ENCODE measurements at regions of chr4 and their contacts with region 1.

Region 1: GRCh38 chr4:185395956-185396723 is 416 bp upstream of the LRP2BP start:
- DNase-seq: peak; percentile 91 to 98 (median 95)
- ATAC-seq: peak; percentile 92
- H3K4me3 ChIP-seq: peak overlapping the region; percentile 73 to 95
- H3K4me3 Mint-ChIP-seq: peak overlapping the region; percentile 95
- H3K27ac ChIP-seq: peak overlapping the region; percentile 98 to 99
- H3K27ac Mint-ChIP-seq: peak overlapping the region; percentile 99
- H3K4me1 ChIP-seq: peaks cover 16% of the 10 kb centered on the region
- H3K4me1 Mint-ChIP-seq: peaks cover 20% of the 10 kb centered on the region
- H3K27me3 ChIP-seq: no peaks in the 10 kb centered on the region
- H3K27me3 Mint-ChIP-seq: no peaks in the 10 kb centered on the region
- CTCF ChIP-seq: no peak

Region 2: DNA sequence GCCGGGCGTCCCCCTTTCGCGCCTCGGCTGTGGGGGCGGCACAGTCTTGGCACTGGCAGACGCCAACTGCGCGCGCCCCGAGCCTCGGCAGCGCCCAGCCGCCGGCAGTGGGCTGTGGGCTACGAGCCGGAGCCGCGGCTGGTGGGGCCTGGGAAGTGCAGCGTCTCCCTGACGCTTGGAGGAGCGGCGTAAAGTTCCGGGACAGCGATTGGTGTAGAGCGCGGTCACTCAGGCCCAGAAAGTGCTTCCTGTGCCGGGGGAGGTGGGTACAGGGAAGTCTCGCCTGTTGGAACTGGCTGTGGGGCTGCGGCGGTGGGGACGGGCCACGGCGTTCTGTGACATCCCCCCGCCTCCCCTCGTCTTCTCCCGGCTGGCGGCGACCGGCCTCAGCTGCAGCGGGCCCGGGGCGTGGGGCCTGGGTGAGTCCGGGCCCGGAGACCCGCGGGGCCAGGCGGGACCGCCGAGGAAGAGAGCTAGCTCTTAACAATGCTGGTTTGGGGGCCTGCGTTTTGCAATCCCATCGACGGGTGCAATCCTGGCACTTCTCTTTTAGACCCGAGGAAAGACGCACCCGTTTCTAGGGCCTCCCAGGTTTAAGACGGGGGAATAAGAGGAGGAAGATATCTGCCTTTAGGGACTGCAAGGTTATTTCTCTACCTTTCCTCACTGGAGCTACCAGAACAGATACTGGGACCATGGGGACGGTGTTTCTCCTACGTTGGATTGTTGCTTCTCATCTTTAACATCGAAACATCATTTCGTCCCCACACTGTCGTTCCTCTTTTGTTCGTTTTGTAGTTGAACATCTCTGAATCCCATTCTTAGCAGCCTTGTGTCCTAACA is 1736.9 kb before region 1 on chr4 and contains the starts of genes RWDD4 and TRAPPC11:
- CTCF ChIA-PET with region 1: no interaction called
- POLR2A ChIA-PET with region 1: no interaction called
- intact Hi-C with region 1: loop called in 1 of 2 experiments (anchors 10 kb)
- DNase-seq: peak; percentile 90 to 99 (median 95)
- ATAC-seq: peak; percentile 96
- H3K4me3 ChIP-seq: peak within 1 kb of the TSS; percentile 72 to 83
- H3K4me3 Mint-ChIP-seq: peak within 1 kb of the TSS; percentile 92
- H3K27ac ChIP-seq: peak within 1 kb of the TSS; percentile 83 to 89
- H3K27ac Mint-ChIP-seq: peak within 1 kb of the TSS; percentile 91
- H3K4me1 ChIP-seq: peaks cover 25% of the 10 kb centered on the region
- H3K4me1 Mint-ChIP-seq: peaks cover 42% of the 10 kb centered on the region
- H3K27me3 ChIP-seq: no peaks in the 10 kb centered on the region
- H3K27me3 Mint-ChIP-seq: no peaks in the 10 kb centered on the region
- CTCF ChIP-seq: no peak
- total RNA-seq, gene RWDD4: 9.0 to 12.1 TPM
- total RNA-seq, gene TRAPPC11: 14.7 to 22.1 TPM

Region 3: DNA sequence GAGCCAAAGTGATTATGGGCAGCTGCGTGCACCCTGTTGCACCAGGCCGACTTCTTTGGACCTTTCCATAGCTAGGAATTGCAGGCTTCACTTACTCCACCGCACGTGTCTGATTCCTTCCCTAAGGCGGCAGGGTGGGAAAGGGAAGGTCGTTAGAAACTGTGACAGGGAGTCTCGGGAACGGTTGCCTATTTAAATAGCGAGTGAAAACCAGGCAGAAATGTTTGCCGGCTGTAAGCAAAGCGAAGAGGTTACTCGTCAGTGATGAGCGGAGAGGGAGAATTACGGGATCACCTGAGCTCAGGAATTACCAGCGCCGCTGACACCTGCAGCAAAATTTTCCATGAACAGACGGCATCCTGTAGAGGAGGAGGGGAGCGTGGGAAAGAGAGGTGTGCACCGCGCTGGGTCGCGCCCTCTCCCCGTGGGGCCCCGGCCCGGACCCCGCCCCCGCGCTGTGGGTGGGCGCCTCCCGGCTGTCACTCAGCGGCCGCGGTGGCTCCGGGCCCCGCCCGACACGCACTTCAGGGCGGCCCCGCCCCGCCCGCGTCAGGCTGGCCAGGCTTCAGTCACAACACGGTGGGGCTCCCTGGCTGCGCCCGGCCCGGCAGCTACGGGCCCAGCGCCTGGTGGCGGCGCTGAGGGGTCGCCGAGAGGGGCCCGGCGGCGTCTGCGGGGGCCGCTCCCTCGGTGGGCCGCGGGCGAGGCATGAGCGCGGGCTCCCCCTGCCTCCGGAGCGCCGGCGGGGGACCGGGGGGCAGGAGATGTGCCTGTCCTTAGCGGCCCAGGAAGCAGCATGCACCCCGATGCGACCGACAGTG is 186.9 kb before region 1 on chr4 and contains the start of gene SNX25:
- CTCF ChIA-PET with region 1: no interaction called
- POLR2A ChIA-PET with region 1: interaction called, 6 read pairs
- intact Hi-C with region 1: loop called in 1 of 2 experiments (anchors 1 kb)
- DNase-seq: peak; percentile 68 to 92 (median 89)
- ATAC-seq: peak; percentile 92
- H3K4me3 ChIP-seq: peak within 1 kb of the TSS; percentile 60 to 71
- H3K4me3 Mint-ChIP-seq: peak within 1 kb of the TSS; percentile 92
- H3K27ac ChIP-seq: peak within 1 kb of the TSS; percentile 34 to 48
- H3K27ac Mint-ChIP-seq: peak within 1 kb of the TSS; percentile 84
- H3K4me1 ChIP-seq: peaks cover 33% of the 10 kb centered on the region
- H3K4me1 Mint-ChIP-seq: peaks cover 50% of the 10 kb centered on the region
- H3K27me3 ChIP-seq: no peaks in the 10 kb centered on the region
- H3K27me3 Mint-ChIP-seq: no peaks in the 10 kb centered on the region
- CTCF ChIP-seq: no peak
- total RNA-seq, gene SNX25: 18.0 to 18.2 TPM

Region 4: DNA sequence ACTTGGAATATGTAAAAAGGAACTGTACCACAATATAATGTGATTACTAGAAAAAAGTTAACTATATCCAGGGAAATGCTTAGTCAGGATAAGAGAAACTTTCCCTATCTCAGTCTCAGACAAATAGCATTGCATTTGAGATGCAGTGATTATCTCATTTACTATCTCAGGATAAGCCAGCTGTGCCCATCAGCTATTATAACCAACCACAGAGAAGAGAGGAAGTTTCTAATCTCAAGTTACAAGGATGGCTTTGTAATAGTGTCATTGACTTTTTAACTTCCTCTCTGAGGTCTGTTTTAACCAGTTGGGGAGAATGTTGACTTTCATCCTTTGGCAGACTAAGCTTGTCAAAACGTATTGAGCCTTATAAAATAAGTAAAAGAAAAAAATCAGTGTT is 130.2 kb before region 1 on chr4:
- CTCF ChIA-PET with region 1: no interaction called
- POLR2A ChIA-PET with region 1: no interaction called
- intact Hi-C with region 1: no loop called
- DNase-seq: peak in 1 of 9 experiments; percentile 19
- ATAC-seq: peak; percentile 79
- H3K4me3 ChIP-seq: no peak overlapping the region
- H3K4me3 Mint-ChIP-seq: no peak overlapping the region
- H3K27ac ChIP-seq: no peak overlapping the region
- H3K27ac Mint-ChIP-seq: peak overlapping the region; percentile 66
- H3K4me1 ChIP-seq: peaks cover 4% of the 10 kb centered on the region
- H3K4me1 Mint-ChIP-seq: peaks cover 21% of the 10 kb centered on the region
- H3K27me3 ChIP-seq: no peaks in the 10 kb centered on the region
- H3K27me3 Mint-ChIP-seq: no peaks in the 10 kb centered on the region
- CTCF ChIP-seq: no peak

Region 5: GRCh38 chr4:185425647-185426352 is 29.7 kb after region 1 on chr4 and contains the start of gene UFSP2:
- CTCF ChIA-PET with region 1: interaction called, 5 read pairs
- POLR2A ChIA-PET with region 1: interaction called, 27 read pairs
- intact Hi-C with region 1: loop called (anchors 1 kb)
- DNase-seq: peak; percentile 75 to 97 (median 89)
- ATAC-seq: peak; percentile 86
- H3K4me3 ChIP-seq: peak within 1 kb of the TSS; percentile 87 to 90
- H3K4me3 Mint-ChIP-seq: peak within 1 kb of the TSS; percentile 83
- H3K27ac ChIP-seq: peak within 1 kb of the TSS; percentile 97 to 99
- H3K27ac Mint-ChIP-seq: peak within 1 kb of the TSS; percentile 100
- H3K4me1 ChIP-seq: peaks cover 18% of the 10 kb centered on the region
- H3K4me1 Mint-ChIP-seq: peaks cover 36% of the 10 kb centered on the region
- H3K27me3 ChIP-seq: no peaks in the 10 kb centered on the region
- H3K27me3 Mint-ChIP-seq: peaks cover 5% of the 10 kb centered on the region
- CTCF ChIP-seq: no peak
- total RNA-seq, gene UFSP2: 13.4 to 17.4 TPM

Region 6: DNA sequence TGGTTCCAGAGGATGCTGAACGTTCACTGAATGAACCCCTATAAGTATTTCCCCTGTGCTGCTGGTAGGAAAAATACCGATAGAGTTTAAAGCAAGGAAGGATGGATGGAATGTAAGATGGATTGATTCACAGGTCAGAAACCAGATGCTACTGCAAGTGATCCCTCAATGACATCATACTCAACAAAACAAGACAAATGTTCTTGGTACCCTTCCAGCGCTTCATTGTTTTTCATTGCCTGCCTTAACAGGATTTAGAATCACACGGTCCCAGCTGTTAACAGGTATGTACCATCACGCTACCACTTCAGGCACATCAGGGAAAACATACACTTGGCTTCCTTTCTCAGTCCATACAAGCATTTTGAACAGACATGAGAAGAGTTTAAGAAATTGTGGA is 554.8 kb after region 1 on chr4:
- CTCF ChIA-PET with region 1: no interaction called
- POLR2A ChIA-PET with region 1: no interaction called
- intact Hi-C with region 1: no loop called
- DNase-seq: no peak
- ATAC-seq: no peak
- H3K4me3 ChIP-seq: no peak overlapping the region
- H3K4me3 Mint-ChIP-seq: no peak overlapping the region
- H3K27ac ChIP-seq: no peak overlapping the region
- H3K27ac Mint-ChIP-seq: no peak overlapping the region
- H3K4me1 ChIP-seq: no peaks in the 10 kb centered on the region
- H3K4me1 Mint-ChIP-seq: no peaks in the 10 kb centered on the region
- H3K27me3 ChIP-seq: no peaks in the 10 kb centered on the region
- H3K27me3 Mint-ChIP-seq: peaks cover 6% of the 10 kb centered on the region
- CTCF ChIP-seq: no peak

Region 7: GRCh38 chr4:186191200-186192065 is 795.3 kb after region 1 on chr4 and contains the start of gene CYP4V2:
- CTCF ChIA-PET with region 1: no interaction called
- POLR2A ChIA-PET with region 1: interaction called, 4 read pairs
- intact Hi-C with region 1: loop called in 1 of 2 experiments (anchors 10 kb)
- DNase-seq: peak; percentile 64 to 92 (median 85)
- ATAC-seq: peak; percentile 80
- H3K4me3 ChIP-seq: peak within 1 kb of the TSS; percentile 73 to 85
- H3K4me3 Mint-ChIP-seq: peak within 1 kb of the TSS; percentile 90
- H3K27ac ChIP-seq: peak within 1 kb of the TSS; percentile 89 to 91
- H3K27ac Mint-ChIP-seq: peak within 1 kb of the TSS; percentile 98
- H3K4me1 ChIP-seq: peaks cover 25% of the 10 kb centered on the region
- H3K4me1 Mint-ChIP-seq: peaks cover 57% of the 10 kb centered on the region
- H3K27me3 ChIP-seq: no peaks in the 10 kb centered on the region
- H3K27me3 Mint-ChIP-seq: no peaks in the 10 kb centered on the region
- CTCF ChIP-seq: no peak
- total RNA-seq, gene CYP4V2: 7.9 to 9.9 TPM

Measured in CD8-positive, alpha-beta T cell (primary cell).